AG04449 (cell line): ENCODE measurements at regions of chr16 and their contacts with region 1.

Region 1: GRCh38 chr16:67883872-67884261 is 818 bp upstream of the NRN1L start:
- DNase-seq: no peak
- H3K4me3 ChIP-seq: no peak overlapping the region
- CTCF ChIP-seq: peak; percentile 88

Region 2: GRCh38 chr16:67857502-67858233 is 26.2 kb before region 1 on chr16:
- CTCF ChIA-PET with region 1: interaction called, 24 read pairs
- POLR2A ChIA-PET with region 1: interaction called, 5 read pairs
- DNase-seq: no peak
- H3K4me3 ChIP-seq: no peak overlapping the region
- CTCF ChIP-seq: no peak

Region 3: DNA sequence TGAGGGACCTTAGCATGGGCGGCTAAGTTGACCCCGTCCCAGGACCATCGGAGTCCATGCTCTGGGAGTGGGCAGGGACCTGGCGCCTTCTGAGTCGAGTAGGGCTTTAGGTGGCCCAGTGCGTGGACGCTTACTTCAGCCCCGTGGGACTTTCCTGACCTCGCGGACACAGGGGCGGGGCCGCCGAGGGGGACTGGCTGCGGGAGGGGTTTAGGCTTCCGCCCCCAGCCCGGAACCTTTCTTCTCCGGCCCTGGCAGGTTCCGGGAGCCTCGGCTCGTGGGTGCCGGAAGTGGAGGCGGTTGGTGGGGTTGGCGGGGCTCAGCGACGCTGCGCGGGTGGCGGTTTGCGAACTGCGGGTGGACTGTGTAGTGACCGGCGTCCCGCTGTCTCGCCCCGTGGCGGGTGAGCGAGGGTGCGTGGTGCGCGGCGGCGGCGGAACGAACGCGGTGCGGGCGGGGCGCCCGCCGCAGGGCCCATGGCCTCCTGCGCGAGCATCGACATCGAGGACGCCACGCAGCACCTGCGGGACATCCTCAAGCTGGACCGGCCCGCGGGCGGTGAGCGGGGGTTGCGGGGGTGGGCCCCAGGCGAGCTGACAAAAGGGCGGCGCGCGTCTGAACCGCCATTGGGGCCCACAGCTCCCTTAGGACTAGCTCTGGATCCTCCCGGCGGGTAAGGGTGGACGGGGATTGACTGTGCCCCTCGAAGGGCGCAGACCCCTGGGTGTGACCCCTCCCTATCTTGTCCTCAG is 10.9 kb before region 1 on chr16 and contains the start of gene EDC4:
- CTCF ChIA-PET with region 1: interaction called, 67 read pairs
- POLR2A ChIA-PET with region 1: no interaction called
- DNase-seq: peak; percentile 10
- H3K4me3 ChIP-seq: peak within 1 kb of the TSS; percentile 68
- CTCF ChIP-seq: no peak

Region 4: DNA sequence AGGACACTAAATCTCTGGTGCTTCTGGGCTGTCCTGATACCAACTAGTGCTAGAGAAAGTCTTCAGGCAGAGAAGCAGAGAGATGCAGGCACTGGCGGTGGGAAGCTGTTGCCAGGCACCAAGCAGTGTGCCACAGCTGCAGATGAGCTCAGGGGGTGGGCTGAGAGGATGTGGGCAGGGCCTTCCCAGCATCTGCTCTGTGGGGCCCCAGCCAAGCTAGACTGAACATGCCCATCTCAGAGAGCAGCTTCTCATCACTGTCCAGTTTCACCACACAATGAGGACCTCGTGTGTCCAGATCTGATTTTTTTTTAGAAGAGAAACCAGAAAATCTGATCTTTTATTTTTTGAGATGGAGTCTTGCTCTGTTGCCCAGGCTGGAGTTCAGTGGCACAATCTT is 26.3 kb after region 1 on chr16:
- CTCF ChIA-PET with region 1: interaction called, 36 read pairs
- POLR2A ChIA-PET with region 1: no interaction called
- DNase-seq: peak; percentile 19
- H3K4me3 ChIP-seq: no peak overlapping the region
- CTCF ChIP-seq: no peak

Region 5: GRCh38 chr16:67935402-67936123 is 51.7 kb after region 1 on chr16:
- CTCF ChIA-PET with region 1: interaction called, 196 read pairs
- POLR2A ChIA-PET with region 1: interaction called, 3 read pairs
- DNase-seq: peak; percentile 56
- H3K4me3 ChIP-seq: peak overlapping the region; percentile 100
- CTCF ChIP-seq: no peak

Region 6: GRCh38 chr16:68040507-68041288 is 156.8 kb after region 1 on chr16:
- CTCF ChIA-PET with region 1: interaction called, 28 read pairs
- POLR2A ChIA-PET with region 1: no interaction called
- DNase-seq: no peak
- H3K4me3 ChIP-seq: no peak overlapping the region
- CTCF ChIP-seq: peak; percentile 90

Region 7: GRCh38 chr16:68417711-68418301 is 533.9 kb after region 1 on chr16:
- CTCF ChIA-PET with region 1: no interaction called
- POLR2A ChIA-PET with region 1: no interaction called
- DNase-seq: no peak
- H3K4me3 ChIP-seq: no peak overlapping the region
- CTCF ChIP-seq: no peak